ENCODE measurements at regions of chr9 and their contacts with region 1.

Region 1: GRCh38 chr9:14366076-14366475 is 52.1 kb upstream of the NFIB start:
- DNase-seq: no peak
- H3K4me3 ChIP-seq: no peak overlapping the region
- H3K27ac ChIP-seq: no peak overlapping the region
- H3K4me1 ChIP-seq: peaks cover 19% of the 10 kb centered on the region
- H3K27me3 ChIP-seq: no peaks in the 10 kb centered on the region
- CTCF ChIP-seq: no peak
- POLR2A ChIP-seq: no peak

Region 2: DNA sequence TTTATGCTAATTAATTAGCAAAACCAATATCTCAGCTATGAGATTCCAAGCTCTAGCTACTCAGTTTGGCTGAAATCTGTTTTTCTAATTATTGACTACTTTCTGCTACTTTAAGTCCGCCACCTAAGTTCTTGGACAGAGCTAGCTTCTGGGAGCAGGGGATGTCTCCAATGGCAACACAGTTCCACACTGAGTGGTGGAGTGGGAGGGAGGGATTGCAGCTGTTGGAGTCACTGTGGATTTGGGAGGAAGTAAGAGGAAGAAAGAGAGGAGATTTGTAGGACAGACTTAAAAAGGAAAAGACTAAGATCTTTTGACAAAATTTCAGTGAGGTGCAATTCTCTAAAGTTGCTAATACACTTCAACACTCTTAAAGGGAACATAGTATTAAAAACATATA is 503.0 kb before region 1 on chr9:
- intact Hi-C with region 1: no loop called
- DNase-seq: no peak
- H3K4me3 ChIP-seq: no peak overlapping the region
- H3K27ac ChIP-seq: no peak overlapping the region
- H3K4me1 ChIP-seq: peaks cover 16% of the 10 kb centered on the region
- H3K27me3 ChIP-seq: no peaks in the 10 kb centered on the region
- CTCF ChIP-seq: no peak
- POLR2A ChIP-seq: no peak

Region 3: DNA sequence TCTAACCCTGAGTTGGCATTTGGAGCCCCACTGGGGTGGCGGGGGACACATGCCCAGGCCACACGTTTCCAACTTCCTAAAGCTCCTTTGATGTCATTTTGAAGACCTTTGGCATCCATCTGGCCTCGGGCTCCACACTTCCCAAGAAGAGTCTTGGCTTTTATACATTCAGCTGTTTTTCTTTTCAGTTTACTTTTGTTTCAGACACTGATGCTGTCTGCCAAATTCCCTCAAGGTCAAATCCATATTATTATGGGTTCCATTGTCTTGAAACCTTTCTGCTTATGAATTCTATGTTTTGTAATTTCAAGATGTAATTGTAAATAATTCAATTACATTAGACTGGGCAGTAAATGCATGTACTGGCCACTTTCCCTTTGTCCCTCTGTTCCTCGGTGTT is 28.5 kb before region 1 on chr9:
- intact Hi-C with region 1: loop called (anchors 2 kb)
- DNase-seq: no peak
- H3K4me3 ChIP-seq: no peak overlapping the region
- H3K27ac ChIP-seq: no peak overlapping the region
- H3K4me1 ChIP-seq: peaks cover 5% of the 10 kb centered on the region
- H3K27me3 ChIP-seq: no peaks in the 10 kb centered on the region
- CTCF ChIP-seq: no peak
- POLR2A ChIP-seq: no peak

Measured in vagina (tissue), 2 donors.